Common myeloid progenitor, CD34-positive (primary cell): ENCODE measurements at regions of chr5 and their contacts with region 1.

Region 1: DNA sequence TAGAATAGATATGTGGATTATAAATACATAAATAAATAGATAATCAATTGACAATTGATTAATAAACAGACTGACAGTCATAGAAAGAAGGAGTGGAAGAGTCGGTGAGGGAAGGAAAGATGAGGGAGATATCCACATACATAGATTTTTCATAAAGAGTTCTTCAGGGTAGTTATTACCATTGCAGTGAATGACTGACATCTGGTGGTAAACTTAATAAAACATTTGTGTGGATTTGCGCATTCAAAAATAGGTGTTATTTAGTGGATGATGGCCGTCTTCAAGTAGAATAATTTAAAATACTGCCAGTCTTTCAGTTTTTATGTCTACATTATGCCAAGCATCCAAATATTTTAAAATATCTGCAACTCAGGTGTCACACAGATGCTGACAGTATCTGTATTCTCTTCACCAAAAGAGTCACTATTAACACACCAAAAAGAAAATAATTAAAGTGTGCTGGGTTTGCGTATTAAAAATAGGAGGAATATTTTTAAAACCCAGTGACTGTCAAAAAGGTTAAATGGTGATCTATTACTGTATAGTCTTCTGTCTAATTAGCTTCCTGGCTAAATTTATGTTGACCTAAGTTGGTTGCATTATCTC is 78.8 kb downstream of the GIN1 start:
- DNase-seq: peak; percentile 59 to 78 (median 76)
- H3K4me3 ChIP-seq: no peak overlapping the region
- H3K27ac ChIP-seq: no peak overlapping the region
- H3K4me1 ChIP-seq: no peaks in the 10 kb centered on the region
- H3K27me3 ChIP-seq: no peaks in the 10 kb centered on the region

Region 2: DNA sequence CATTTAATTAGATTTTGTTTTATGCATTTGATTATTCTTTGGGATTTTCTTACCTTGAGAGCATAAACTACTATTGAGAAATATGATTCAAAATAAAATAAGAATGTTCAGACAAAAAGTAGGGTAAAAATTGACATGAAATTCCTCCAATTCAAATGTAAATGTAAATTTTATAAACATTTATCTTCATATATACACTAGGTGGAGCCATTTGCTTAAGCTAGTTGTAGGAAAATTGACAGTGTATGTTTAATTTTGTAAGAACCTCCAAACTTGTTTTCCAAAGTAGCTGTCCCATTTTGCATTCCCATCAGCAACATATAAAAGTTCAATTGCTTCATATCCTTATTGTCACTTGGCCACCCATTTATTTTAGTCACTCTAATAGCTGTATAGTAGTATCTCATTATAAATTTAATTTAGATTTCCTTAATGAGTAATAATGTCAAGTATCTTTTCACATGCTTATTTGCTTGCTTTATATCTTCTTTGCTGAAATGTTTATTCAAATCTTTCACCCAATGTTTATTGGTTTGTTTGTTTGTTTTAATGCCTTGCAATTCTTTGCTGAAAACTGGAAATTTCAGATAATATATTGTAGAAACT is 504.7 kb before region 1 on chr5:
- CTCF ChIA-PET with region 1: interaction called, 20 read pairs
- POLR2A ChIA-PET with region 1: no interaction called
- DNase-seq: peak in 2 of 3 donors; percentile 35 to 46
- H3K4me3 ChIP-seq: no peak overlapping the region
- H3K27ac ChIP-seq: no peak overlapping the region
- H3K4me1 ChIP-seq: no peaks in the 10 kb centered on the region
- H3K27me3 ChIP-seq: no peaks in the 10 kb centered on the region

Region 3: DNA sequence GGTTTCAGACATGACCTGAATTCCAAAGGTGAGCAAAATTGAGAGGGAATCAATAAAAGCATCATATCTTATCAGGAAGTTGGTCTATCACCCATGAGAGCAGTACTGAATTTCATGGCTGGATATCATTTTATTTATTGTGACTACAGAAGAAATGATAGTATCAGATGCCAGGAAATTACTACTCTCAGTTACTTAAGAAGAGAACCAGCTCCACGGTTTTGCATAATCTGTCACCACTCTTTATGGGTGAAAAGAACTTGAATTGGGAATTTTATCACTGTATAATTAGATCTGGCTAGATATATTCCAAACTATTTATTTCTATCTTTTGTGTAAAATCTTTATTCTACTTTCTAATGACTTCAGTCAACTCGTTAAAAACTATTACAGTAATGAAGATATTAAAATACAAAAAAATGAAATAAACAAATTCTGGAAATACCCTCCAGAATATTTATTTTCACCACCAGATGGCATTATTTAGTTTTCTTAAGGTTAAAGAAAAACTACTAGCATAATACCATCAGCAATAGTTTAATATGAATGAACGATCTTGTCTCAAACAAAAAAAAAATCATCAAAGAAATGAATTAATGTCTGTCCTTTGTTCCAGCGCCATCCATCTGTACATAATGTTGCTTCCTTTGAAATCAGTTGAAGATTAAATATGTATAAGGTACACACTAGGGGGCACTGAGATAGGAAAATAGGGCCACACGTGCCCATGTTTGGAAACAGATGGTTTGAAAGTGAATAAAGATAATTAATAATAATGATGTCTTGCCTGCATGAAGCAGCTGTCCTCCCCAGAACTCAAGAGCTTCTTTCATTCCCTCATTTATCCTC is 457.7 kb before region 1 on chr5:
- CTCF ChIA-PET with region 1: interaction called, 12 read pairs
- POLR2A ChIA-PET with region 1: no interaction called
- DNase-seq: peak; percentile 31 to 57 (median 56)
- H3K4me3 ChIP-seq: peak overlapping the region in 1 of 7 experiments; percentile 24
- H3K27ac ChIP-seq: no peak overlapping the region
- H3K4me1 ChIP-seq: no peaks in the 10 kb centered on the region
- H3K27me3 ChIP-seq: no peaks in the 10 kb centered on the region

Region 4: DNA sequence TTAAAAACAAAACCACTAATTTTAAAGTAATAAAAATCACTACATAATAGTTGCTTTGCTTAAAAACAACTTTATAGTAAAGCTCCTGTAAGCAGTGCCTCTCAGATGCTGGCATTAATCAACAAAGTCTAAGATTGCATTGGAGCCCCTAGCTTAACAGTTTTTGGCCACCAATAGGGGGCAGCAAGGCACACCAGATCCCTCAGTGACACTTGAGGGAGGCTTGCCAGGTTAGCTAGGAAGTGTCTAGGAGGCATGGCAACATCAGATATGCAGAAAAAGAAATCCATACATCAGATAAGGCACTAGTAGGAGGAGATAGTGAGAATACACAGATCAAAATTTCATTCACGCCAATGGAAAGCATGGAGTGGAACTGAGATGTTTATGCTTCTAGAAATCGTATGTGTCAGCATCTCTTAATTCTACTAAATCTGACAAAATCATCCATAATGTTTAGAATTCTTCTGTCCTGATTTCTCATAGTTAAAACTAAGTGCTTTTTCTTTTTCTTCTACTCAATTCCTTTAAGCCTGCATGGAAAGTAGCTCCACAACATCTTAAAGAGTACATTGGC is 359.7 kb before region 1 on chr5:
- CTCF ChIA-PET with region 1: interaction called, 11 read pairs
- POLR2A ChIA-PET with region 1: no interaction called
- DNase-seq: peak; percentile 66 to 76 (median 69)
- H3K4me3 ChIP-seq: no peak overlapping the region
- H3K27ac ChIP-seq: no peak overlapping the region
- H3K4me1 ChIP-seq: peaks cover 0 to 4% (median 0%) of the 10 kb centered on the region in 4 experiments
- H3K27me3 ChIP-seq: no peaks in the 10 kb centered on the region